CD4-positive, alpha-beta T cell (primary cell): ENCODE measurements at regions of chr13 and their contacts with region 1.

Region 1: DNA sequence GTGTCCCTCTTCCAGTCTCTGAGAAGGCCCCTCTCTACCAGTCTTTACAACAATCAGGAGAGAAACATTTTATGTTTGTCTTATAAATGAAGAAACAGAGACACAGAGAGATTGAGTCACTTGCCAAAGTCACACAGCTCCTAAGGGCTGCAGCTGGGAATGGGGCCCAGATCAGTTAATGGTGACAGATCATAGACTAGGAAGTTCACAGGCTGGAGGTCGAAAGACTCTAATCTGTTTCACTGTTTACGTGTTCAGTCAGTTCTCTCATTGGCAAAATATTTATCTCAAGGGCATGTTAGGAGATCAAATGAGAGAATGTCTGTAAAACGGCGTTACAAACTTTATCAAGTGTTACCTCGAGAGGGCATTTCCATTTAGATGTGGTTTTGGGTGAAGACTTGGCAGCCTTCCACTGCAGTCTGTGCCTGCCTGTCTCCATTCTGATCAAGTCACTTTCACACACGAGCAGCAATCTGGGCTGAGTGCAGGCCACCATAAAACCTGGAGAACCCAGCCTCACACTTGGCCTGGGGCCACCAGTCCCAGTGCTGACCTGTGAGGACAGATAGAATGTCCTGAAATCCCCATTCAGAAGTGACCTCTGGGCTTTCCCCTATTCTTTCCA is 65.1 kb downstream of the SIAH3 start:
- DNase-seq: peak in 4 of 14 experiments; percentile 10 to 52 (median 22)
- ATAC-seq: peak; percentile 79
- H3K4me3 ChIP-seq: no peak overlapping the region
- H3K4me3 Mint-ChIP-seq: no peak overlapping the region
- H3K27ac ChIP-seq: no peak overlapping the region
- H3K27ac Mint-ChIP-seq: peak overlapping the region; percentile 12
- H3K4me1 ChIP-seq: no peaks in the 10 kb centered on the region
- H3K4me1 Mint-ChIP-seq: peaks cover 36% of the 10 kb centered on the region
- H3K27me3 ChIP-seq: no peaks in the 10 kb centered on the region
- H3K27me3 Mint-ChIP-seq: no peaks in the 10 kb centered on the region
- CTCF ChIP-seq: no peak

Region 2: DNA sequence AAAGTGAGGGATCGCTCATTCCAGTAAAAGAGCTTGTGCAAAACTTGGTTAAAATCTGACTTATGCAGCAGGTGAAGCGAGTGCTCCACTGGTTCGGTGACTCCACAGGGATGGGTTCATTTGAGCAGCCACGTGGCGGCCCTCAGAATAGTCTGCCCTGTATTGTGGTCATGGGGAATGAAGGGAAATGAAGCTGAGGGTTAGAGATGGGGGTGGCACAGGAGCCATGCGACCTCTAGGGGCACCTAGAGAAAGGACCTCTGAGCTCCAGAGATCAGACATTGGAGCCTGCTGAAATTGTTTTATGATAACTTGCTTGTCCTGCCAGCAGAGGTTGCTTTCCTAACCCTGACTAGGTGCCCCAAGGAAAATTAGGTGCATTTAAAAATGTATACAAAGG is 57.6 kb before region 1 on chr13:
- CTCF ChIA-PET with region 1: no interaction called
- POLR2A ChIA-PET with region 1: no interaction called
- intact Hi-C with region 1: no loop called
- DNase-seq: peak in 1 of 14 experiments; percentile 1
- ATAC-seq: no peak
- H3K4me3 ChIP-seq: no peak overlapping the region
- H3K4me3 Mint-ChIP-seq: no peak overlapping the region
- H3K27ac ChIP-seq: no peak overlapping the region
- H3K27ac Mint-ChIP-seq: no peak overlapping the region
- H3K4me1 ChIP-seq: no peaks in the 10 kb centered on the region
- H3K4me1 Mint-ChIP-seq: no peaks in the 10 kb centered on the region
- H3K27me3 ChIP-seq: no peaks in the 10 kb centered on the region
- H3K27me3 Mint-ChIP-seq: no peaks in the 10 kb centered on the region
- CTCF ChIP-seq: no peak

Region 3: DNA sequence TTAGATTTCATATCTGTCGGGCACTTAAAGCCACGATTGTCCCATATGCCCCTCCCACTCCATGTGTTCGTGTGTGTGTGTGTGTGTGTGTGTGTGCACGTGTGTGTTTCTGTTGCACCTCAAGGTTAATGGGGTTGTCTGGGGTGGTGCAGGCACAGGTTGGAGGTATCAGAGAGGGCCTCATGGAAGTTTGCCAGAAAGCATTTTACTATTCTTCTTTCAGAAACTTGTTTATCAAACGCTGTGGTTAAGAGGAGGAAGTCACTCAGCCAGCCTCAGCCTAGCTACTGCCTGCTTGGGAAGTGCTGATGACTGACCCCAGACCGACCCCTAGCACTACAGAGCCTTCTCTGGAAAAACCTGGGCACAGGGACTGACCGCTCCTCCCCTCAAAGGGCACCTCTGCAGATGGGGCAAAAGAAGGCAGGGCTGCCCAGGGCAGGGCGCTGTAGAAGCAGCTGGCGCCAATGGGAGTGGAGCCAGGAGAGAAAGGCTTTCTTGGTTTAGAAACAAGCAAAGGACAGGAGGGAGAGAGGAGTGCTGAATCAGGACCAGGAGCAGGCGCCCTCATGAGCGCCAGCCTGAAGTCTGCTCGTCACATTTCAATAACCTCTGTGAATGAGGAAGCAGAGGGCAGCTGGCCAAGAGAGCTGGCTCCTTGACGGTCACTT is 61.3 kb after region 1 on chr13:
- CTCF ChIA-PET with region 1: no interaction called
- POLR2A ChIA-PET with region 1: interaction called, 4 read pairs
- intact Hi-C with region 1: loop called in 1 of 2 experiments (anchors 5 kb)
- DNase-seq: peak; percentile 28 to 79 (median 52)
- ATAC-seq: peak; percentile 80
- H3K4me3 ChIP-seq: peak overlapping the region; percentile 8
- H3K4me3 Mint-ChIP-seq: peak overlapping the region; percentile 88
- H3K27ac ChIP-seq: no peak overlapping the region
- H3K27ac Mint-ChIP-seq: peak overlapping the region; percentile 86
- H3K4me1 ChIP-seq: peaks cover 44% of the 10 kb centered on the region
- H3K4me1 Mint-ChIP-seq: peaks cover 62% of the 10 kb centered on the region
- H3K27me3 ChIP-seq: no peaks in the 10 kb centered on the region
- H3K27me3 Mint-ChIP-seq: no peaks in the 10 kb centered on the region
- CTCF ChIP-seq: no peak